OCI-LY7 (cell line): ENCODE measurements at regions of chr9 and their contacts with region 1.

Region 1: GRCh38 chr9:83707768-83708514 is at the start of gene UBQLN1:
- DNase-seq: peak; percentile 95
- H3K4me3 ChIP-seq: peak within 1 kb of the TSS; percentile 89
- H3K27ac ChIP-seq: peak within 1 kb of the TSS; percentile 85
- H3K4me1 ChIP-seq: peaks cover 37% of the 10 kb centered on the region
- CTCF ChIP-seq: no peak
- total RNA-seq, gene UBQLN1: 83.9 and 115 TPM in 2 replicates

Region 2: DNA sequence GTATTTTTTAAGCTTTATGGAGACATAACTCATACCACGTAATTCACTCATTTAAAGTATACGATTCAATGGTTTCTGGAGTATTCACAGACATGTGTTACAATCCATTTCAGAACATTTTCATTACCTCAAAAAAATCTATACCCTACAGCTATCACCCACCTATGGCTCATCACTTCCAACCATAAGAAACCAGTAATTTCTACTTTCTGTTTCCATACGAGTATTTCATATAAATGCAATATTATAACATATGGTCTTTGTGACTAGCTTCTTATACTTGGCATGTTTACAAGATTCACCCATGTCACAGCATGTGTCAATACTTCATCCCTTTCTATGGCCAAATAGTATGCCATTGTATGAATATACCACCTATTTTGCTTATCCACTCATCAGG is 19.0 kb before region 1 on chr9:
- CTCF ChIA-PET with region 1: no interaction called
- POLR2A ChIA-PET with region 1: interaction called, 41 read pairs
- intact Hi-C with region 1: loop called (anchors 2 kb)
- DNase-seq: no peak
- H3K4me3 ChIP-seq: no peak overlapping the region
- H3K27ac ChIP-seq: no peak overlapping the region
- H3K4me1 ChIP-seq: peaks cover 63% of the 10 kb centered on the region
- CTCF ChIP-seq: no peak

Region 3: DNA sequence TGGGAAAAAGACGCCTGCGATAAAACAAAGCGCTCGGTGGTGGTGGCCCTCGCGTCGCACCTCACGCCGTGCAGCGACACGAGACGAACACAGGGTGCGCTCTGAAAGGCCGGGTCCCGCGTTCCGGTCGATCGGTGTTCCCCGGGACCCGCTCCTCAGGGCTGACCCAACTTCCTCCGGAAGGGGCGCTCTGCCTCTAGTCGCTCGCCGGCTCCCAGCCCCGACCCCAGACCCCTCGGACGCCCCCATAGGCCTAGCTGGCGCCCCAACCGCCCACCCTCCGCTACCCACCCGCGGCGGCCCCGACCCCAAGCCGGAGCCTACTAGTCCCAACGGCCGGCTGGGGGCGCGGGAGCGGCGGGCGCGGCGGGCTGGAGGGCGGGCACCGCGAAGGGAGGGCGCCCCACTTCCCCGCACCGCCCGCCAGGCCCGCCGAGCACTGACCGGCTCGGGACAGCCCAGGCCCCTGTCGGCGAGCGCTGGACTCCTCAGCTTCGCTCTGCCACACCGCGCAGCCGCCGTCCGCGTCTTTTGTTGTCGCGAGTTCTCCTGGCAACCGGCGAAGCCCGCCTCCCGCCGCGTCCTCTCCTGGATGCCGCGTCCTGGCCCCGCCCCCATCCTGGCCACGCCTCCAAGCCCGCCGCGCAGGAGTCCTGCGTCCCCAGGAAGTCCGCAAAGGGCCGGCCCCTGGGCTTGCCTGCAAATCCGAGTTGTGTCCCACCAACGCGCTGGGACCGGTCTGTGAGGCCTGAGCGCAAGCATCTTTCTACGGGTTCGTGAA is 213.2 kb after region 1 on chr9 and contains the start of gene KIF27:
- CTCF ChIA-PET with region 1: no interaction called
- POLR2A ChIA-PET with region 1: interaction called, 3 read pairs
- intact Hi-C with region 1: loop called (anchors 2 kb)
- DNase-seq: peak; percentile 95
- H3K4me3 ChIP-seq: peak within 1 kb of the TSS; percentile 80
- H3K27ac ChIP-seq: peak within 1 kb of the TSS; percentile 68
- H3K4me1 ChIP-seq: peaks cover 22% of the 10 kb centered on the region
- CTCF ChIP-seq: peak; percentile 70
- total RNA-seq, gene KIF27: 5.6 and 6.0 TPM in 2 replicates